ENCODE measurements at regions of chr2 and their contacts with region 1.

Region 1: GRCh38 chr2:134118279-134119116 is 135.4 kb upstream of the MGAT5 start:
- DNase-seq: peak; percentile 80 to 90 (median 81)
- H3K4me3 ChIP-seq: no peak overlapping the region
- H3K4me3 Mint-ChIP-seq: peak overlapping the region; percentile 96 to 100 (median 99)
- H3K27ac ChIP-seq: no peak overlapping the region
- H3K27ac Mint-ChIP-seq: peak overlapping the region; percentile 49 to 99 (median 96)
- H3K4me1 ChIP-seq: peaks cover 36% of the 10 kb centered on the region
- H3K4me1 Mint-ChIP-seq: peaks cover 27 to 41% (median 33%) of the 10 kb centered on the region in 4 donors
- H3K27me3 ChIP-seq: no peaks in the 10 kb centered on the region
- H3K27me3 Mint-ChIP-seq: no peaks in the 10 kb centered on the region

Region 2: DNA sequence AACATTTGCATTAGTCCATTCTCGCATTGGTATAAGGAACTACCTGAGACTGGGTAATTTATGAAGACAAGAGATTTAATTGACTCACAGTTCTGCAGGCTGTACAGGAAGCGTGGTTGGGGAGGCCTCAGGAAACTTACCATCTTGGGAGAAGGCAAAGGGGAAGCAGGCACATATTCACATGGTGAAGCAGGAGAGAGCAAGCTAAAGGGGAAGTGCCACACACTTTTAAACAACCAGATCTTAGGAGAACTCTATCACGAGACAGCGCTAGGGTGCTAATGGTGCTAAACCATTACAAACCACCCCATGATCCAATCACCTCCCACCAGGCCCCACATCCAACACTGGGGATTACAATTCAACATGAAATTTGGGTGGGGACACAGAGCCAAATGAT is 66.3 kb before region 1 on chr2:
- CTCF ChIA-PET with region 1: no interaction called
- POLR2A ChIA-PET with region 1: no interaction called
- intact Hi-C with region 1: no loop called
- DNase-seq: no peak
- H3K4me3 ChIP-seq: no peak overlapping the region
- H3K4me3 Mint-ChIP-seq: no peak overlapping the region
- H3K27ac ChIP-seq: no peak overlapping the region
- H3K27ac Mint-ChIP-seq: peak overlapping the region in 1 of 7 donors; percentile 19
- H3K4me1 ChIP-seq: no peaks in the 10 kb centered on the region
- H3K4me1 Mint-ChIP-seq: peaks cover 0 to 2% (median 0%) of the 10 kb centered on the region in 4 donors
- H3K27me3 ChIP-seq: no peaks in the 10 kb centered on the region
- H3K27me3 Mint-ChIP-seq: peaks cover 0 to 10% of the 10 kb centered on the region in 2 donors

Region 3: DNA sequence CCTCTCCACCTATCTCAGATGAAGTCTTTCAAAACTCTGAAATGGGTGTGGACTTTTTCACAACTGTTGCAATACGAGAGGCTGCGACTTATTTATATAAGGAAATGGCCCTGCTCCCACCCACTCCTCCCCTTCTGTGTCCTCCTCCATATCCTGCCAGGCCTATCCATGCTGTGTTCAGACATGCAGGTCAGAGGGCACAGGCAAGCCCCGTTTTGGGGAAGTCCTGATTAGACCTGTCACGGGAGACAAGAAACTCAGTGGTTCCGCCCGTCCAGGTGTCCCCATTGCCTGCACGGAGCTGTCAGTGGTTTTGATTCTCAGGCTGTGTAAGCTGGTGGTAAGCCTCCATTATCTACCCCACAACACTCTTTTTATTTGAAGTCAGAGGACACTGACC is 35.7 kb after region 1 on chr2:
- CTCF ChIA-PET with region 1: interaction called, 11 read pairs
- POLR2A ChIA-PET with region 1: no interaction called
- intact Hi-C with region 1: no loop called
- DNase-seq: no peak
- H3K4me3 ChIP-seq: no peak overlapping the region
- H3K4me3 Mint-ChIP-seq: no peak overlapping the region
- H3K27ac ChIP-seq: no peak overlapping the region
- H3K27ac Mint-ChIP-seq: peak overlapping the region in 6 of 7 donors; percentile 20 to 79 (median 54)
- H3K4me1 ChIP-seq: peaks cover 23% of the 10 kb centered on the region
- H3K4me1 Mint-ChIP-seq: peaks cover 39 to 73% (median 55%) of the 10 kb centered on the region in 4 donors
- H3K27me3 ChIP-seq: no peaks in the 10 kb centered on the region
- H3K27me3 Mint-ChIP-seq: no peaks in the 10 kb centered on the region

Region 4: GRCh38 chr2:134207564-134208209 is 89.2 kb after region 1 on chr2:
- CTCF ChIA-PET with region 1: interaction called, 358 read pairs
- POLR2A ChIA-PET with region 1: interaction called, 98 read pairs
- intact Hi-C with region 1: loop called (anchors 5 kb)
- DNase-seq: peak; percentile 58 to 68 (median 64)
- H3K4me3 ChIP-seq: no peak overlapping the region
- H3K4me3 Mint-ChIP-seq: peak overlapping the region in 2 of 8 donors; percentile 4 to 50
- H3K27ac ChIP-seq: no peak overlapping the region
- H3K27ac Mint-ChIP-seq: peak overlapping the region in 5 of 7 donors; percentile 25 to 80 (median 63)
- H3K4me1 ChIP-seq: peaks cover 53% of the 10 kb centered on the region
- H3K4me1 Mint-ChIP-seq: peaks cover 10 to 21% (median 18%) of the 10 kb centered on the region in 4 donors
- H3K27me3 ChIP-seq: no peaks in the 10 kb centered on the region
- H3K27me3 Mint-ChIP-seq: no peaks in the 10 kb centered on the region

Region 5: GRCh38 chr2:134245340-134245984 is 127.0 kb after region 1 on chr2:
- CTCF ChIA-PET with region 1: interaction called, 233 read pairs
- POLR2A ChIA-PET with region 1: interaction called, 60 read pairs
- intact Hi-C with region 1: loop called (anchors 1 kb)
- DNase-seq: peak; percentile 66 to 79 (median 69)
- H3K4me3 ChIP-seq: no peak overlapping the region
- H3K4me3 Mint-ChIP-seq: peak overlapping the region in 7 of 8 donors; percentile 37 to 73 (median 65)
- H3K27ac ChIP-seq: no peak overlapping the region
- H3K27ac Mint-ChIP-seq: peak overlapping the region; percentile 13 to 88 (median 81)
- H3K4me1 ChIP-seq: peaks cover 99% of the 10 kb centered on the region
- H3K4me1 Mint-ChIP-seq: peaks cover 70 to 97% (median 87%) of the 10 kb centered on the region in 4 donors
- H3K27me3 ChIP-seq: no peaks in the 10 kb centered on the region
- H3K27me3 Mint-ChIP-seq: no peaks in the 10 kb centered on the region

Region 6: DNA sequence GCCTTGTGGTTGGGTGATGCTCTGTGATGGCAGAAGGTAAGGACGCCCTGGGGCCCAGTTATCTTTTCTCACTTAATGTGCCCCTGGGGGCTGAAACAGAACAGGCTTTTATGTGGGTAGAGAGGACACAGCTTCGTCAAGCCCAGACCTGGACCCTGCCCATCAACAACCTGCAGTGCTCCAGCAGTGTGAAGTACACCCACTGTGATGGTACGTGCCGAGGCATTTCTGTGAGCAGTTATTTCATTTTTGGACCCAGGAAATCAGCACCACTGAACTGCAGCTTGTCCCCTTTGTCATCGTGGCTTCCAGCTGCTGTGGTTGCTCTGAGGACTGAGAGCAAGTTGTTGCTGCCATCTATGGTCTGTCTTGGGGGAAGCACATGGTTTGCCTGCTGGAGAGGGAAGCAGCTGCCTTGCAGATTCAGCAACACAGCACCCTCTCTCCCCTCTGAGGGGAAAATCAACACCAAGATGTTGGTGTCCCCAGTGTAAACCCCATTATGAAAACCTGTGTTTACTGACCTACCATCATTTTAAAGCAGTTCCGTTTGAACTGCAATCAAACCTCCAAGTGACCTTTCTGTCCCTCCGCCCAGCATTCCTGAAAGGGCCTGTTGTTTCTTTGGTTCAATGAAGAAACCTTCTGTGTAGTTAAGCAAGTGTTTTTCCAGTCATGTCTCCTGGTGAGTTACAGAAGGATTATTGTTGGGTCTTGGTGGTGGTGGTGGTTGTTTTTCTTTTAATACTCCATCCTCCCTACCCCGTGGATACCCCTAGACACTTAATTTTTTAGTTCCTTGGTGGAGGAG is 293.5 kb after region 1 on chr2:
- CTCF ChIA-PET with region 1: interaction called, 173 read pairs
- POLR2A ChIA-PET with region 1: interaction called, 58 read pairs
- intact Hi-C with region 1: loop called (anchors 1 kb)
- DNase-seq: peak; percentile 68 to 77 (median 73)
- H3K4me3 ChIP-seq: no peak overlapping the region
- H3K4me3 Mint-ChIP-seq: peak overlapping the region in 4 of 8 donors; percentile 6 to 18 (median 14)
- H3K27ac ChIP-seq: no peak overlapping the region
- H3K27ac Mint-ChIP-seq: peak overlapping the region in 6 of 7 donors; percentile 36 to 83 (median 56)
- H3K4me1 ChIP-seq: peaks cover 51% of the 10 kb centered on the region
- H3K4me1 Mint-ChIP-seq: peaks cover 48 to 56% (median 54%) of the 10 kb centered on the region in 4 donors
- H3K27me3 ChIP-seq: no peaks in the 10 kb centered on the region
- H3K27me3 Mint-ChIP-seq: no peaks in the 10 kb centered on the region

Region 7: DNA sequence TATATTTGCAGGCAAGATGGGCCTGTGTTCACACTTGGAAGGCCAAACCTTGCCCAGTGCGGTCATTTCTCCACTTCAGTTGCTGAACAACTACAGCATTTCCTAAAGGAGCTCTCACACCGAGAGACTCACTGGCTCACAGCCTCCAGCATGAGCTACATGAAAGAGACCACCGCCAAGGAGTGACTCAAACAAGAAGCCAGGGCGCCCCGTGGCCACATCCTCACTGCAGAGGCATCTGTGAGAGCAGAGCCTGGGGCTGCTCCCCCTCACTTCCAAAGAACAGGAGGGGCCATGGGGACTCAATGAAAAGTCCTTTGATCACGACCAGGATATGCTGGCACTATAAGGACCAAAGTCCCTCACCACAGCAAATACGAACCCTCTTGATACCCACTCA is 550.3 kb after region 1 on chr2:
- CTCF ChIA-PET with region 1: interaction called, 5 read pairs
- POLR2A ChIA-PET with region 1: no interaction called
- intact Hi-C with region 1: loop called (anchors 10 kb)
- DNase-seq: peak; percentile 82 to 96 (median 87)
- H3K4me3 ChIP-seq: peak overlapping the region in 1 of 2 donors; percentile 11
- H3K4me3 Mint-ChIP-seq: peak overlapping the region; percentile 45 to 77 (median 60)
- H3K27ac ChIP-seq: peak overlapping the region; percentile 59
- H3K27ac Mint-ChIP-seq: peak overlapping the region; percentile 84 to 99 (median 93)
- H3K4me1 ChIP-seq: peaks cover 77% of the 10 kb centered on the region
- H3K4me1 Mint-ChIP-seq: peaks cover 65 to 97% (median 86%) of the 10 kb centered on the region in 4 donors
- H3K27me3 ChIP-seq: no peaks in the 10 kb centered on the region
- H3K27me3 Mint-ChIP-seq: peaks cover 0 to 1% of the 10 kb centered on the region in 2 donors

Region 8: DNA sequence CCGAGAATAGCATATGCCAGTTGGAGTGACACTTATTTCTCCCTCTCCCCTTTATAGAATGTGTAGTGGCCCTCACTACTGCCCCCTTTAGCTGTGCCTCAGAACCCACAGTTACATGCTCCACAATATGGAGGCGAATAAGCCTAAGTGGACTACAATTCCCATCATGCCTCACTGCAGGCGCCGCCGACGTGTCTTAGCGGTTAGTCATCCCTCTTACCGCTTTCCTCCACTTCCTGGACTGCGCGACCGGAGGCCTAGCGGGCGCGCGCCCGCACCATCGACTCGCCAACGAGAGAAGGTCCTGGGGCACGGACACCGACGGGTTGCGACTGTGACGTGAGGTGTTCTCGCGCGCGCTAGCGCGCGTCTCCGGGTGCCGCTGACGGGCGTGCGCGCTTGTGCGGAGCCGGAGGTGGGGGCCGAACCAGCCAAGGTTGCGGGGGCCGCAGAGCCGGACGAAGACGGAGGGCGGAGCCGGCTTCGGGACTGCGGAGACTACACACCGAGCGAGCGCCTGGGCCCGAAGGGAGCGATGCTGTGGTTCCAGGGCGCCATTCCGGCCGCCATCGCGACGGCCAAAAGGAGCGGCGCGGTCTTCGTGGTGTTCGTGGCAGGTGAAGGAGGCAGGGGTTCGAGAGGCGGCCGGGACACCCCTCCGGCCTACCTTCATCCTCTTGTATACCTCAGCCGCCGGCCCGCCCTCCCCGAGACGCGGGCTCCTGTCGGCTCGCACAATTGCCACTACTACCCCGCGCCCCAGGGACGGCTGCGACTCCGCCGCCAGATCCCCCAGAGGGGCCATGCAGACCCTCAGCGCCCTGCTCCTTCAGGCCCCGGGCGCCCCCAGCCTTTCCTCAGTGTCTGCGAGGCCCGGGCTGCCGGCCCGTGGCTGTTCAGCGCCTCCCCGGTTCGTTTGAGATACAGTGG is 1623.2 kb after region 1 on chr2 and contains the start of gene UBXN4:
- CTCF ChIA-PET with region 1: no interaction called
- POLR2A ChIA-PET with region 1: interaction called, 4 read pairs
- intact Hi-C with region 1: loop called (anchors 5 kb)
- DNase-seq: peak; percentile 88 to 97 (median 91)
- H3K4me3 ChIP-seq: peak within 1 kb of the TSS; percentile 53 to 80
- H3K4me3 Mint-ChIP-seq: peak within 1 kb of the TSS; percentile 94 to 99 (median 97)
- H3K27ac ChIP-seq: peak within 1 kb of the TSS; percentile 97
- H3K27ac Mint-ChIP-seq: peak within 1 kb of the TSS in 6 of 7 donors; percentile 96 to 99 (median 97)
- H3K4me1 ChIP-seq: peaks cover 40% of the 10 kb centered on the region
- H3K4me1 Mint-ChIP-seq: peaks cover 29 to 43% (median 37%) of the 10 kb centered on the region in 4 donors
- H3K27me3 ChIP-seq: no peaks in the 10 kb centered on the region
- H3K27me3 Mint-ChIP-seq: no peaks in the 10 kb centered on the region
- total RNA-seq, gene UBXN4: 116 to 121 TPM

Measured in CD4-positive, alpha-beta memory T cell (primary cell).